Calu3 (cell line): ENCODE measurements at regions of chr18 and their contacts with region 1.

Region 1: GRCh38 chr18:8747440-8747937 is 42.1 kb downstream of the MTCL1 start:
- DNase-seq: peak; percentile 42
- H3K4me3 Mint-ChIP-seq: peak overlapping the region; percentile 57
- H3K27ac Mint-ChIP-seq: peak overlapping the region; percentile 90
- H3K4me1 Mint-ChIP-seq: peaks cover 81% of the 10 kb centered on the region
- H3K27me3 Mint-ChIP-seq: no peaks in the 10 kb centered on the region
- CTCF ChIP-seq: no peak

Region 2: GRCh38 chr18:8771930-8772329 is 24.4 kb after region 1 on chr18:
- CTCF ChIA-PET with region 1: no interaction called
- intact Hi-C with region 1: no loop called
- DNase-seq: peak; percentile 28
- H3K4me3 Mint-ChIP-seq: no peak overlapping the region
- H3K27ac Mint-ChIP-seq: no peak overlapping the region
- H3K4me1 Mint-ChIP-seq: peaks cover 8% of the 10 kb centered on the region
- H3K27me3 Mint-ChIP-seq: no peaks in the 10 kb centered on the region
- CTCF ChIP-seq: no peak

Region 3: DNA sequence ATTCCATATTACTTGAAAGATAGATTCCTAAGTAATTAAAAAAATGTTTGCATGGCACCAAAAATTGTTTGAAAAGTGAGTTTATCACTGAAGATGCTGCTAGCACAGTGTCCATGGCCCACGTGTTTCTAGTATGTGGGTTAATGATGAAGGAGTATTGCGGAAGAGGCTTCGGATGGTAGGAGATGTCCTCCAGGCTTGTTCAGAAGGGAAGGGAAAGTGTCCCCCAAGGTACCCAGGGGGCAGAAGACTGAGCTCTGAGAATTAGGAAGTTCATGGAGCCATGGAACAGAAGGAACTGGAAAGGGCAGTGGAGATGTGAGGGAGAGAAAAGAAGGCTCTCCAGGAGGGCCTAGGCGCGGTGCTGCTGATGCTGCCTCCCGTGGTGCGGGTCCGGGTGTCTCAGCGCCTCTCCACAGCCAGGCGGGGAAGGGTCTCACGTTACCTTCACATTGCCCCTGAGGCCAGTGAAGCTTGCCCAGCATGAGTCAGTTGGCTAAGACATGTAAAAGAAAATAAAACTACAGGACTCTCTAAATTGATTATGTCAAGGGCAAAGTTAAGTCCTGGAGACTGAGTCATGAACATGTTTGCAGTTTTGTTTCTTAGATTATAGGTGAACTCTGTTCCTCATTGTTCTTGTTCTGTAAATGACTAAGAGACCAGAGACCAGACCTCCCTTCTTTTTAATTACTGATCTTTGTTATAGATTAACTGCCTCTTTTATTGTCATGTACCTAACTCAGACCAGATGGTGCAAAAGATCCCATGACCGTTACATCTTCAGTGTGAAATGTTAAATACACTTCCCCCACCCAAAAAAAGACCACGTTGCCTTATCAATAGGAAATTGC is 46.9 kb after region 1 on chr18:
- CTCF ChIA-PET with region 1: no interaction called
- intact Hi-C with region 1: loop called (anchors 2 kb)
- DNase-seq: peak; percentile 43
- H3K4me3 Mint-ChIP-seq: peak overlapping the region; percentile 7
- H3K27ac Mint-ChIP-seq: peak overlapping the region; percentile 90
- H3K4me1 Mint-ChIP-seq: peaks cover 89% of the 10 kb centered on the region
- H3K27me3 Mint-ChIP-seq: no peaks in the 10 kb centered on the region
- CTCF ChIP-seq: no peak